ENCODE measurements at regions of chr6 and their contacts with region 1.

Region 1: GRCh38 chr6:109496036-109496772 is 13.2 kb upstream of the ZBTB24 start:
- DNase-seq: no peak
- H3K4me3 Mint-ChIP-seq: no peak overlapping the region
- H3K27ac Mint-ChIP-seq: no peak overlapping the region
- H3K4me1 Mint-ChIP-seq: peaks cover 26% of the 10 kb centered on the region
- H3K27me3 Mint-ChIP-seq: no peaks in the 10 kb centered on the region

Region 2: GRCh38 chr6:109483736-109484057 is 12.5 kb before region 1 on chr6:
- CTCF ChIA-PET with region 1: interaction called, 15 read pairs
- POLR2A ChIA-PET with region 1: no interaction called
- DNase-seq: no peak
- H3K4me3 Mint-ChIP-seq: peak overlapping the region; percentile 68
- H3K27ac Mint-ChIP-seq: peak overlapping the region; percentile 76
- H3K4me1 Mint-ChIP-seq: peaks cover 42% of the 10 kb centered on the region
- H3K27me3 Mint-ChIP-seq: peaks cover 3% of the 10 kb centered on the region

Region 3: DNA sequence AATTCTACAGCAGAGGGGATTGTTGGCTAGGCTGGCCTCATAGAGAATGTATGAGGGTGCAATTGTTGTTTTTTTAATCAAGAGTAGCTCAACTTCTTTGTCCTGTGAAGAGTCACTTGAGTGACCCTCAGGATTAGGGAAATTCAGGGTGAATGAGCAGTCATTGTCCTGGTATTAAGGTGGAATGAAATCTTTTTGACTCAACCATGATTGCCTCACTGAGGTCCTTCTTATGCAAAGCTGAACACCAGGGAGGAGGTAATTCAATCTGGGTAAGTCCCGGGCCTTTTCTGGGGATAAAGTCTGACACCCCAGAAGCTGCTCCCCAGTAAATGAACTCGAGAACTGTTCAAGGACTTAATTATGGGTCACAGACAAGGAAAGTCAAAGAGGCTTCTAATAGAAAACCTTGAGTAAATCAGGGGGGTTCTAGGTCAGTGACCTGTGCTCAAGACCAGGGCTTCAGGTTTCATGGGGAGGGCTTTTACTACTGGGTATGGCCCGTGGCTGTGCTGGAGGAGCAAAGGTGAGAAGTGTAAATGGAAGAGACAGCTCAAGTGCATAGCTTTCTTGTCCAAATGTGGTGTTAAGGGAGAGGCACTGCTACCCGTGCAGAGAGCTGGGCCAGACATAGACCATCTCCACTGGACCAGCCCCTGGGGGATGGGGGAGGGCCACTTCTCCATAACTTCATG is 12.1 kb after region 1 on chr6:
- CTCF ChIA-PET with region 1: interaction called, 11 read pairs
- POLR2A ChIA-PET with region 1: no interaction called
- DNase-seq: no peak
- H3K4me3 Mint-ChIP-seq: no peak overlapping the region
- H3K27ac Mint-ChIP-seq: no peak overlapping the region
- H3K4me1 Mint-ChIP-seq: no peaks in the 10 kb centered on the region
- H3K27me3 Mint-ChIP-seq: peaks cover 2% of the 10 kb centered on the region

Measured in activated CD4-positive, alpha-beta T cell treated with anti-CD3 and anti-CD28 coated beads, Interleukin-2, amount 10 ng/mL, durations not matched to agents 7 days and 5 days (primary cell).